Heart right ventricle (tissue), 16 donors: ENCODE measurements at regions of chr15 and their contacts with region 1.

Region 1: DNA sequence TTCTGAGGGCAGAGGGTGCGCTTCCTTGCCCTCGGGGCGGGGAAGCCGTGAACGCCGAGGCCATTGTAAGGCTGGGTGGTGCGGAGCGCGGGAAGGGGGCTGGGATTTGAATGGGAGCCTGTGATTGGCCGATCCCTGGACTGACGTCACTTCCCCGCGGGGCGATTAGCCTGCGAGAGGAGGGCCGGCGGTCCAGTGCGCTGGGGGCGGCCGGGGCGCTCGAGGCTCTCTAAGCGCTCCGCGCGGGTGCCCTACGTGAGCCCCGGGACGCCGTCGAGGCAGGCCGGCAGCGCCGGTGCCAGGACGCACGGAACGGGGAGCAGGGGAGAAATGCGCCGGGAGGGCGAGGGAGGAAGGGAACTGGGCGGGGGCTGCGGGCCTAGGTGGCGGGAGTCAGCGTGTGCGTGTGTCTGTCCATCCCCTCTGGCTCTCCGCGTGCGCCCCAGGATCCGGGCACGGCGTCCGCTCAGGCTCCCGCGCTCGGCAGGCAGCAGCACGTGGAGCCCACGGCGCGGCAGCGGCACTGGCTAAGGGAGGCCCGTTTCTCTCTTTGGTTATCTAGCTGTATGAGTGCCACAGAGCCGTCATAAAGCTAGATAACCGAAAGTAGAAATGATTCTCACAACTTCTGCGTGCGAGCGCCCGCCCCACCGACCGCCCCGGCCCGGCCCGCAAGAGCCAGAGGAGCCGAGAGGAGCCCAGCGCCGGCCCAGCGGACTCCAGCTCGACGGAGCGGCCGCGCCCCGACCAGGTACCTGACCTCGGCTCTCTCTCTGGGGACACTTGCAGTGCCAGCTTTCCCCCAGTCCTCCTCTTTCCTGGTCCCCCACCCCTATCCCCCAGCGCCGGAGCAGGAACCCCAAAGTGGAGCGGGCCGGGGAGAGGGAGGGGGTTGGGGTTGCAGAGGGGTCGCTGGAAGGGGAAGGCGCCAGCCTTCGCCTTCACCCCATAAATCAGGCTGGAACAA is 33.1 kb upstream of the POLG start:
- DNase-seq: no peak
- ATAC-seq: peak in 1 of 8 donors; percentile 26
- H3K4me3 ChIP-seq: peak overlapping the region in 7 of 10 donors; percentile 5 to 34 (median 8)
- H3K27ac ChIP-seq: no peak overlapping the region
- H3K4me1 ChIP-seq: peaks cover 0 to 41% (median 18%) of the 10 kb centered on the region in 9 donors
- H3K27me3 ChIP-seq: peaks cover 74 to 100% (median 100%) of the 10 kb centered on the region in 7 donors
- CTCF ChIP-seq: no peak

Region 2: DNA sequence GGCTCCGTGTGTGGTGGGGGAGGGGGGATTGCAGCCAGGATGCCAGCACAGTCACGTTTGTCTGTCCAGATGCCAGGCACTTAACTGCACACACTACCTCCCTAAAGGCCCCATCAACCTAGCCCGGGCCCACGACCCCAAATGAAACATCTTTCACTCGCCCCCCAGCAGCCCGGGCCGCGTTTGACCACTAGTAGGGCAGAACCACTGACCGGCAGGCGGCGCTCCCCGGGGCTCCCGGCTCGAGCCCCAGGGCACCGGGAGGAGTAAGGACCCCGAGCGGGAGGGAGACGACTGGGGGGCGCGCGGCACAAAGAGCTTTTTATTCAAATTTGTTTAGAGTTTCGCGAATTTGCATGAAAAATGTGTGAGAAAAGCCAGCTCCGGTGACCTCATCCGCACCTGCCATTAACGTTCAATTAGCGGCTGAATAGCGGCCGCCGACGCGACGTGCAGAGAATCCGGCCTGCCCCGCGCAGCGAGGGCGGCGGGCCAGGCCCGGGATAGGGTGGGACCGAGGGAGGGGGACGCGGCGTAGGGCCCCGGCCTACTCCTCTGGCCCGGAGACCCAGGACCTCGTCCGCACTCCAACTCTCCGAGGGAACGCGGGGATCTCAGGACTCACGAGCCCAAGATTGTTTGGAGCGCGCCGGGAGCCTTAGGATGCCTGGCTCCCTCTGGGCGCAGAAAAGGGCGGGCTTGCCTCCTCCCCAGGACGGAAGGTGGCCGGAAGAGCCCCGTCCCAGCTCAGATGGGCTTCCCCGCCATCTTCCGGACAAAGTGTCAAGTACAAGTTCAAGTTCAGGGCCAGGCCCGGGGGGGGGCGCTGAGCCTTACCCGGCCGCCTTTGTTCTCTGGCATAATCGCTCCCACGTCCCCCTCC is 31.7 kb after region 1 on chr15:
- intact Hi-C with region 1: loop called in 1 of 10 experiments (anchors 5 kb)
- DNase-seq: no peak
- ATAC-seq: peak in 5 of 8 donors; percentile 16 to 60 (median 35)
- H3K4me3 ChIP-seq: peak overlapping the region; percentile 7 to 52 (median 38)
- H3K27ac ChIP-seq: no peak overlapping the region
- H3K4me1 ChIP-seq: peaks cover 5 to 40% (median 15%) of the 10 kb centered on the region in 9 donors
- H3K27me3 ChIP-seq: peaks cover 28 to 100% (median 98%) of the 10 kb centered on the region in 7 donors
- CTCF ChIP-seq: peak in 5 of 9 donors; percentile 20 to 45 (median 25)

Region 3: DNA sequence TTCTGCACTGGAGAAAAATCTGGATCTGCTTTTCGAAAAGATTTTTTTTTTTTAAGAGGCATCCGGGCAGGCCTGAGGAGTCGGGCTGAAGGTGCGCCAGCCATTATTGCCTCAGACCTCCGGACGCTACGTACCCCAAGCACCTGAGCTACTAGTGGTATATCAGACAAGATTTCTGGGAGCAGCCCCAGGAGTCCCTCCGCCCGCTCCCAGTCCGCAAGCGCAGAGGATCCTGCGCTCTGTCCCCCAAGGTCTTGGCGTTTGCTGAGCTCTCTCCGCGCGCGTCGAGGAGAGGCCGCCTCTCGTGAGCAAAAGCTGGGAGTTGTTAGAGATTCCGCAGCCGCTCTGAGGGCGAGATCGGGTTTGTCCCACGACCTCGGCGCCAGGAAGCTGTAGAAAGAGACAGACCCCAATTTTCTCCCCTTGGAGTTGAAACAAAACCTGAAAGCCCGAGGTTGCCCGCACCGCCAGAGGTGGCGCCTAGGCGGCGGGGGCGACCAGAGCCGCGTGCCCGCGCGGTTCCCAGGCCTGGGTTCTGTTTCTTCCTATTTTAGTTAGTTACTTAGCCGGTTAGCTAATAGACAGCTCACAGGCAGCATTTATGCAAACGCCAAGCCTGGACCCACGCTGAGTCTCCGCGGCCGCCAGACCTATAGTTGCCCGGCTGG is 39.3 kb after region 1 on chr15:
- intact Hi-C with region 1: loop called in 3 of 10 experiments (anchors 5 kb)
- DNase-seq: no peak
- ATAC-seq: no peak
- H3K4me3 ChIP-seq: peak overlapping the region in 3 of 10 donors; percentile 1 to 28 (median 20)
- H3K27ac ChIP-seq: no peak overlapping the region
- H3K4me1 ChIP-seq: peaks cover 2 to 56% (median 37%) of the 10 kb centered on the region in 9 donors
- H3K27me3 ChIP-seq: peaks cover 41 to 100% (median 99%) of the 10 kb centered on the region in 7 donors
- CTCF ChIP-seq: peak in 1 of 9 donors; percentile 6